Naive thymus-derived CD4-positive, alpha-beta T cell (primary cell): ENCODE measurements at regions of chr22 and their contacts with region 1.

Region 1: DNA sequence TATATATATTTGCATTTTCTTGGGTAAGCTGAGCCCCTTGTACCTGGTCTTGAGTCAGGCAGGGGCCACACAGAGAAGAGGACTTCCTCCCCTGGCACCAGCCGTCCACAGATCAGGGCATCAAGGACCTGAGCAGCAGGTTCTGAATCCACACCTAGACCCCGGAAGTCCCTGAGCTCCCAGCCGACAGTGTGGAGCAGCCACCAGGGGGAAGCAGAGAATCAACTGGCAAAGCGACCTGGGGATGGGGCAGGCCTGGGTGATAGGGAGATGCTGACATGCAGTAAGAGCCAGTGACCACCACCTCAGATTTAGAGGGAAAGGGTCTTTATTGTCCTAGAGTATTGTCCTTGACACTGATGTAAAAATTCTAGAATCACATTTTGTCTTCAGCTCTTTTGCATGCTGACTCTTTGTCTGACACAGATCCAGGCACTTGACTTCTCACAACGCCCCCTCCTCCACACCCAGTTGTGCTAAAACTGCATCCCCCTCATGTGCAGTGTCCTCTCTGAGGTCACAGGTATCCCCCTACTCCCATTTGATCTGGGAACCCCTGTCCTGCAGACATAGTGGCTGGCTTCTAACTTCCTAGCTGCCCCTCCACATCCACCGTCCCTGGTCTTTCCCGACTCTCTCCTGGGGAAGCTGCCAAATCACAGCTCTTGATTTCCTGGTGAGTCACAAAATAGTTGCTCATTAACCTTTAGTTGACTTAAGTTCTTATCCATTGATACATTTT is 109.3 kb downstream of the GGTLC2 start:
- DNase-seq: peak; percentile 52 to 78 (median 74)
- ATAC-seq: peak; percentile 92
- H3K4me3 ChIP-seq: peak overlapping the region; percentile 29
- H3K4me3 Mint-ChIP-seq: peak overlapping the region in 8 of 10 donors; percentile 57 to 72 (median 68)
- H3K27ac ChIP-seq: peak overlapping the region; percentile 57
- H3K27ac Mint-ChIP-seq: peak overlapping the region in 8 of 9 donors; percentile 88 to 96 (median 95)
- H3K4me1 ChIP-seq: peaks cover 11 to 57% of the 10 kb centered on the region in 2 donors
- H3K4me1 Mint-ChIP-seq: peaks cover 4 to 48% (median 44%) of the 10 kb centered on the region in 7 donors
- H3K27me3 ChIP-seq: no peaks in the 10 kb centered on the region
- H3K27me3 Mint-ChIP-seq: peaks cover 0 to 3% (median 0%) of the 10 kb centered on the region in 5 donors

Region 2: GRCh38 chr22:22770280-22770871 is 16.7 kb after region 1 on chr22:
- CTCF ChIA-PET with region 1: interaction called, 29 read pairs
- POLR2A ChIA-PET with region 1: no interaction called
- intact Hi-C with region 1: no loop called
- DNase-seq: peak in 7 of 9 donors; percentile 9 to 52 (median 28)
- ATAC-seq: peak; percentile 75
- H3K4me3 ChIP-seq: no peak overlapping the region
- H3K4me3 Mint-ChIP-seq: no peak overlapping the region
- H3K27ac ChIP-seq: no peak overlapping the region
- H3K27ac Mint-ChIP-seq: peak overlapping the region in 1 of 9 donors; percentile 18
- H3K4me1 ChIP-seq: peaks cover 0 to 49% of the 10 kb centered on the region in 2 donors
- H3K4me1 Mint-ChIP-seq: peaks cover 0 to 6% (median 0%) of the 10 kb centered on the region in 7 donors
- H3K27me3 ChIP-seq: no peaks in the 10 kb centered on the region
- H3K27me3 Mint-ChIP-seq: peaks cover 5 to 26% (median 11%) of the 10 kb centered on the region in 5 donors

Region 3: DNA sequence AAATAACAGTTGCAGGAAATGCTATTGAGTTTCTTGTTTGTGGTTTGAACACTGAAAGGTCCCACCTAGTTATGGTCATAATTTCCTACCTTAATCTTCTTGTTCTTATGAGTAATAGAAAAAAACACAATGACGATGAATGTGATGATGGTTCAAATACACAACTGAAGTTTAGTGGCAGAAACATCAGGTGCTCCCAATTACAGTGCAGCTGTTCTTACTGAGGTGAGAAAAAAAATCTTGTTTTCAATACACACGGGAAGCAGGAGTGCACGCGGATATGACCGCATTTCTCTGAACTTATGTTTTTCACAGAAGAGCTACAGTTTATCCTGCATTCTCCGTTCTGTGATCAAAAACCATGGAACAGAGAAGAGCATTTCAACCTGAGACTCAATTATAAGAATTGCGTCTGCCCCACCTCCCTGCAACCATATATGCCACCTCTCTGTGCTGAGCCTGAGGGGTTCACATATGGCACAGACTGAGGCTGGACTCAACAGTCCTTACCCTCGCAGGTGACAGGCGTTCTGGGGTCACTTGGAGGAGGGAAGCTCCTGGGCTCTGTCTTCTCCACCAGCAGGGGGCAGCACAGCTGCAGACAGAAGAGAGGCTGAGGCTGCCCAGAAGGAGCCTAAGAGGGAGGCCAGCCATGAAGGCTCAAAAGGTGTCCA is 34.2 kb after region 1 on chr22:
- CTCF ChIA-PET with region 1: interaction called, 18 read pairs
- POLR2A ChIA-PET with region 1: interaction called, 3 read pairs
- intact Hi-C with region 1: loop called in 1 of 2 experiments (anchors 2 kb)
- DNase-seq: peak; percentile 33 to 72 (median 61)
- ATAC-seq: peak; percentile 82
- H3K4me3 ChIP-seq: no peak overlapping the region
- H3K4me3 Mint-ChIP-seq: peak overlapping the region in 1 of 10 donors; percentile 44
- H3K27ac ChIP-seq: no peak overlapping the region
- H3K27ac Mint-ChIP-seq: peak overlapping the region in 4 of 9 donors; percentile 8 to 48 (median 26)
- H3K4me1 ChIP-seq: peaks cover 10 to 56% of the 10 kb centered on the region in 2 donors
- H3K4me1 Mint-ChIP-seq: peaks cover 12 to 44% (median 26%) of the 10 kb centered on the region in 7 donors
- H3K27me3 ChIP-seq: no peaks in the 10 kb centered on the region
- H3K27me3 Mint-ChIP-seq: peaks cover 0 to 13% (median 0%) of the 10 kb centered on the region in 5 donors

Region 4: GRCh38 chr22:22802339-22802970 is 48.8 kb after region 1 on chr22:
- CTCF ChIA-PET with region 1: interaction called, 11 read pairs
- POLR2A ChIA-PET with region 1: interaction called, 5 read pairs
- intact Hi-C with region 1: no loop called
- DNase-seq: peak in 5 of 9 donors; percentile 26 to 53 (median 34)
- ATAC-seq: peak; percentile 79
- H3K4me3 ChIP-seq: no peak overlapping the region
- H3K4me3 Mint-ChIP-seq: no peak overlapping the region
- H3K27ac ChIP-seq: no peak overlapping the region
- H3K27ac Mint-ChIP-seq: peak overlapping the region in 1 of 9 donors; percentile 10
- H3K4me1 ChIP-seq: peaks cover 0 to 41% of the 10 kb centered on the region in 2 donors
- H3K4me1 Mint-ChIP-seq: peaks cover 0 to 29% (median 16%) of the 10 kb centered on the region in 7 donors
- H3K27me3 ChIP-seq: no peaks in the 10 kb centered on the region
- H3K27me3 Mint-ChIP-seq: peaks cover 0 to 51% (median 0%) of the 10 kb centered on the region in 5 donors

Region 5: GRCh38 chr22:22848364-22848866 is 94.7 kb after region 1 on chr22:
- CTCF ChIA-PET with region 1: interaction called, 5 read pairs
- POLR2A ChIA-PET with region 1: interaction called, 4 read pairs
- intact Hi-C with region 1: loop called in 1 of 2 experiments (anchors 1 kb)
- DNase-seq: peak; percentile 35 to 75 (median 52)
- ATAC-seq: peak; percentile 83
- H3K4me3 ChIP-seq: no peak overlapping the region
- H3K4me3 Mint-ChIP-seq: no peak overlapping the region
- H3K27ac ChIP-seq: no peak overlapping the region
- H3K27ac Mint-ChIP-seq: peak overlapping the region in 3 of 9 donors; percentile 22 to 79 (median 52)
- H3K4me1 ChIP-seq: peaks cover 26 to 30% of the 10 kb centered on the region in 2 donors
- H3K4me1 Mint-ChIP-seq: peaks cover 8 to 57% (median 48%) of the 10 kb centered on the region in 7 donors
- H3K27me3 ChIP-seq: no peaks in the 10 kb centered on the region
- H3K27me3 Mint-ChIP-seq: peaks cover 0 to 59% (median 0%) of the 10 kb centered on the region in 5 donors

Region 6: GRCh38 chr22:22877523-22878210 is 124.0 kb after region 1 on chr22:
- CTCF ChIA-PET with region 1: interaction called, 148 read pairs
- POLR2A ChIA-PET with region 1: interaction called, 3 read pairs
- intact Hi-C with region 1: loop called in 1 of 2 experiments (anchors 1 kb)
- DNase-seq: peak; percentile 43 to 80 (median 72)
- ATAC-seq: peak; percentile 67
- H3K4me3 ChIP-seq: no peak overlapping the region
- H3K4me3 Mint-ChIP-seq: no peak overlapping the region
- H3K27ac ChIP-seq: no peak overlapping the region
- H3K27ac Mint-ChIP-seq: peak overlapping the region in 3 of 9 donors; percentile 36 to 42 (median 40)
- H3K4me1 ChIP-seq: no peaks in the 10 kb centered on the region
- H3K4me1 Mint-ChIP-seq: peaks cover 0 to 4% (median 3%) of the 10 kb centered on the region in 7 donors
- H3K27me3 ChIP-seq: no peaks in the 10 kb centered on the region
- H3K27me3 Mint-ChIP-seq: peaks cover 0 to 48% (median 0%) of the 10 kb centered on the region in 5 donors

Region 7: DNA sequence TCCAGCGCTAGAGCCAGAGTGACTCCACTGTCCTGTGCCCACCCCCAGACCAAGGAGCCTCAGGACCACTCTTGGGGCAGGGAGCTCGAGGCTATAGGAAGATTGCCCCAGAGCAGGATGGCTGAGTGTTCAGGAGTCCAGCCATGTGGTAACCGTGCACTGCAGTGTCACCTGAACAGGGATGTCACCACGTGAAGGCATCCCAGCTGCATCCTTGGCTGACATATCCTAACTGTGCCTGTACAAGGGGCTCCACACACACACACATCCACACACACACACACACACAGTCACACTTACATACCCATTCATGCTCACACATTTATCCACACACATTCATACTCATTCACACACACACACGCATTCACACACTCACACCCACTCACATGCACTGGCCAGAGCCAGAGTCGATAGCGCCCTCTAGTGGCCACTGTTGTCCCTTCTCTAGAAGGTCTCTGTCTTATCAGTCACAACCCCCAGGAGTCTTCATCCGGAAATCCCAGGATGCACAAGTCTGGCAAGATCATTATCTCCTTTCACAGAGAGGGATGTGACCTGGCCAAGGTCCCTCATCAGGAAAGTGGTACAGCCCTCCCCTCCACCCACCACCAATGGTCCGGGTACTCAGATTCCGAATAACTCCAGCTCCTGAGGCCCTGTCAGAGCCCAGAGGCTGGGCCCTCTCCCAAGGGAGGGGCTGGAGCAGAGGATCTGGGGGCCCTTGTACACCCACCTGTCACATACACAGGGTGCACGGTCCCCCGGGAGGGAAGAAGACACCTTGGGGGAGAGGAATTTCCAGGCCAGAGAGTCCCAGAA is 189.0 kb after region 1 on chr22:
- CTCF ChIA-PET with region 1: interaction called, 3 read pairs
- POLR2A ChIA-PET with region 1: no interaction called
- intact Hi-C with region 1: loop called in 1 of 2 experiments (anchors 5 kb)
- DNase-seq: peak; percentile 31 to 66 (median 53)
- ATAC-seq: peak; percentile 89
- H3K4me3 ChIP-seq: no peak overlapping the region
- H3K4me3 Mint-ChIP-seq: peak overlapping the region in 1 of 10 donors; percentile 0
- H3K27ac ChIP-seq: no peak overlapping the region
- H3K27ac Mint-ChIP-seq: peak overlapping the region in 5 of 9 donors; percentile 0 to 44 (median 28)
- H3K4me1 ChIP-seq: no peaks in the 10 kb centered on the region
- H3K4me1 Mint-ChIP-seq: peaks cover 4 to 9% (median 5%) of the 10 kb centered on the region in 7 donors
- H3K27me3 ChIP-seq: no peaks in the 10 kb centered on the region
- H3K27me3 Mint-ChIP-seq: peaks cover 0 to 21% (median 0%) of the 10 kb centered on the region in 5 donors